ENCODE measurements at regions of chr13 and their contacts with region 1.

Region 1: GRCh38 chr13:19329365-19329764 is 147.7 kb upstream of the TUBA3C start:
- DNase-seq: no peak
- H3K4me3 ChIP-seq: no peak overlapping the region
- H3K27ac ChIP-seq: no peak overlapping the region
- H3K4me1 ChIP-seq: no peaks in the 10 kb centered on the region
- CTCF ChIP-seq: no peak

Region 2: DNA sequence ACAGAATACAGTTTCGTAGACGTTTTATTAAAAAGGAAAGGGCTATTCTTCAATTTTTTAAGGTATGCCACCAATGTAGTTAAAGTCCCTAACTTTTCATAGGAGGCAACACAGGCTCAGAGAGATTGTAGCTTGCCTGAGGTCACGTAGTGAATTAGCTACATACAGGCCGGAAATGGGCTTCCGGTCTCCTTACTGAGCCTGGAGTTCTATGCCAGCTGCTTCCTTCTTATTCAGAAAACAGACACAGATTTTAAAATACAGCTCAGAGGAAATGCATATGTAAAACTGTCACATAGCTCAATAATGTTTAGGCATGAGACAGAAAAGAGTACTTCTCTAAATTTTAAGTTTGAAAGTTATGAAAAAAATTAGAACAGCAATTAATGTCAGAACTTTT is 62.4 kb before region 1 on chr13:
- CTCF ChIA-PET with region 1: no interaction called
- POLR2A ChIA-PET with region 1: no interaction called
- intact Hi-C with region 1: loop called (anchors 10 kb)
- DNase-seq: no peak
- H3K4me3 ChIP-seq: no peak overlapping the region
- H3K27ac ChIP-seq: no peak overlapping the region
- H3K4me1 ChIP-seq: no peaks in the 10 kb centered on the region
- CTCF ChIP-seq: no peak

Measured in OCI-LY7 (cell line).